ENCODE measurements at regions of chr17 and their contacts with region 1.

Region 1: DNA sequence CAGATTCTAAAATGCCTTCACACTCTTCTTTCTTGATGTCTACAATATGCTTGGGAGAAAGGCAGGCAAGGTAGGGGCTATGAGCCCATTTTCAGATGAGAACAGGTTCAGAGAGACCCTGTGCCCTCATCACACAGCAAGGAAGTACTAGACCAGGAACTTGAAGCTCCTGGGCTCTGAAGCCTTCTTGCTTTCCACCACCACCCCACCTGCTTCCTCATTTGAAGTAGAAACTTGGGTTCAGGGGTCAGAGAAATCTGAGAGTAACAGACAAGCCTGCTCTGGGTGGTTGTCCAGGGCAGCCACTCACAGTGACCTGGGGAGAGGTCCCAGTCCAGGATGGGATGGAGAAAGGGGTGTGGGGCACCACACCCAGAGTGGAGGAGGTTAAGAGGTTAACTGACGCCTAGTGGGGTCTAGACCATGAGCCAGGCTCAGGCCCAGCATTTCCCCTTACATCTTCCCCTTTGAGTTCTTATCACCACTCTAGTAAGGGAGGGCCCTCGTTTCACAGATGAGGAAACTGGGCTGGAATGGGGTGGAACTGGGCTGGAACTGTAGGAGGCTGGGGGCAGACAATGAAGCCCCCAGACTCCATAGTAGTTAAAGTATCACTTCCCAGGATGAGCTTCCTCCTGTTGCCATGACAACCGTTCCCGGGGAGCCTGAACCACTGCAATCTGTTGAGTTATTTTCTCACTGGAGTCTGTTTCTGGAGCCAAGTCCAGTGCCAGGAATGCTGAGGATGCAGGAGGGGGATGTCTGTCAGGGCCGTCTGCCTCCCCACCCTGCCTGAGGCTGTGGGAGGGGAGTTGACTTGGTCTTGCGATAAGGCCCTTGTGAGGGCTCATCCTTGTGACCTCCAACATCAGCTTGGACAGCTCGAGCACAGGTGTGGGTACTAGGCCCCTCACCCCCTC is 16.2 kb upstream of the PHF12 start:
- DNase-seq: no peak
- CTCF ChIP-seq: no peak

Region 2: DNA sequence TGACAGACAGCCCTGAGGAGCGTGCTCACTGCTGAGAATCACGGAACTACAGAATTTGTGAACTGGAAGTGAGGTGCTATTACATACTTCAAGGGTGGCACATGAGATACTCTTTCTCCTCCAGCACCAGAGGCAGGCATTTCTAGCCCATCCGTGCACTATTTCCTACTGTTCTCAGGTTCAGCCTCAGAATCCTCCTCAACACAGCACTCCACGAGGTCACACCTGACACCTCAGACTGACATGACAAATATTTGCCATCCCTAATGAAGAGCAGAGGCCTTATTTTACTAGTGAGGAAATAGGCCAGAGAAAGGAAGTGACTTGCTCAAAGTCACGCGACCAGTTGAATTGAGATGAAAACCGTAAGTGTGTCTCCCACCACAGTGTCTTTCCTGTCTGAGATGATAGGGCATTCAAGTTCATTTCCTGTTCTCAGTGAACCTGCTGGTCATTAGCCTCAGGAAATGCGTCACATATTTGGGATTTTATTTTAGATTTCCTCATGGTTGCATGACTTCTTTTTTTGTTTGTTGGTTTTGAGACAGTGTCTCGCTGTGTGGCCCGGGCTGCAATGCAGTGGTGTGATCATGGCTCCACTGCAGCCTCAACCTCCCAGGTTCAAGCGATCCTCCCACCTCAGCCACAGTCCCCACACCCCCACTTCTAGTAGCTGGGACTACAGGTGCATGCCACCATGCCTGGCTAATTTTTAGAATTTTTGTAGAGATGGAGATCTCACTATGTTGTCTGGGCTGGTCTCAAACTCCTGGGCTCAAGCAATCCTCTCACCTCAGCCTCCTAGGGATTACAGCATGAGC is 14.9 kb after region 1 on chr17:
- CTCF ChIA-PET with region 1: interaction called, 18 read pairs
- POLR2A ChIA-PET with region 1: no interaction called
- DNase-seq: peak; percentile 62
- CTCF ChIP-seq: no peak

Region 3: DNA sequence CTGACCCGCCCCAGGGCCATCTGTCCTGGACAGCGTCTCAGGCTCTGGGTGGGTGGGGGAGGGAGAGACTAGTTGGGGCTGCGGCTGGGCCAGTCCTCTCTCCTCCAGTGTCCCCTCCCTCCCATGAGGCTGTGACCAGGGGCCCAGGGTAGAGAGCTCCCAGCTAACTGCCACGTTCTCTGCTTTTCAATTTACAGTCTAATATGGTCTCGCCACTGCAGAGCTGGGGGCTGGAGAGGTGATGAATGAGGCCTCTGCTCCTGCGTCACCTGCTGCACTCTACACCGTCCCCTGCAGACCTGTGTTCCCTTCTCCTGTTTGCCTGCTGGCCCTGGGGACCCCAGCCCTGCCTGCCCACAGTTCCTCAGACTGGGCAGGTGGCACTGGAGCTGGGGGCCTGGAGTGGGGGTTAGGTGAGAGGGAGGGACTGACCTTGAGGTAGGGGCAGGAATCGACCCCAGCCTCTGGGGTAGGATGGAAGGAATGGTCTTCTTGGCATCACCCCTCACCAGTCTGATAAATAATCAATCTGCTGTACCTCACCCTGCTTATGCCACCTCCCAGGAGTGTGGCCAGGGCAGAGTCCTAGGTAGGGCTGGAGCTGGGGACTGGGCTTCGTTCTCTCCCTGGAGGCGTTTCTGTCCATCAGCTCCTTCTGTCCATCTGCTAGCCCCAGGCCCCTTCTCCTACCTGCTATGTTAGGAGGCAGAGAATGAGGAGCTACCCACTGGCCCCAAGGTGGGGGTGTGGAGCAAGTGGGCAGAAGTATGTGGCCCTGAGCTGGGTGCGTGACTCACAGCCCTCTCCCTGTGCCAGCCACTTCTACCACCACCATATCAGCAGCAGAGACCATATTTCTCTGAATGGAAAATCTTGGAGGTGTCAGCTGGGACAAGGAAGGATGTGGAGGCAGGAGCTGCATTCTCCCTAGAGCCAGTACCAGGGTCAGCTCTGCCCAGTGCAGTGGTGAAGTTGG is 25.4 kb after region 1 on chr17:
- CTCF ChIA-PET with region 1: interaction called, 18 read pairs
- POLR2A ChIA-PET with region 1: no interaction called
- DNase-seq: no peak
- CTCF ChIP-seq: no peak

Region 4: GRCh38 chr17:29111816-29112499 is 144.5 kb after region 1 on chr17:
- CTCF ChIA-PET with region 1: interaction called, 346 read pairs
- POLR2A ChIA-PET with region 1: no interaction called
- DNase-seq: peak; percentile 76
- CTCF ChIP-seq: peak; percentile 92

Region 5: DNA sequence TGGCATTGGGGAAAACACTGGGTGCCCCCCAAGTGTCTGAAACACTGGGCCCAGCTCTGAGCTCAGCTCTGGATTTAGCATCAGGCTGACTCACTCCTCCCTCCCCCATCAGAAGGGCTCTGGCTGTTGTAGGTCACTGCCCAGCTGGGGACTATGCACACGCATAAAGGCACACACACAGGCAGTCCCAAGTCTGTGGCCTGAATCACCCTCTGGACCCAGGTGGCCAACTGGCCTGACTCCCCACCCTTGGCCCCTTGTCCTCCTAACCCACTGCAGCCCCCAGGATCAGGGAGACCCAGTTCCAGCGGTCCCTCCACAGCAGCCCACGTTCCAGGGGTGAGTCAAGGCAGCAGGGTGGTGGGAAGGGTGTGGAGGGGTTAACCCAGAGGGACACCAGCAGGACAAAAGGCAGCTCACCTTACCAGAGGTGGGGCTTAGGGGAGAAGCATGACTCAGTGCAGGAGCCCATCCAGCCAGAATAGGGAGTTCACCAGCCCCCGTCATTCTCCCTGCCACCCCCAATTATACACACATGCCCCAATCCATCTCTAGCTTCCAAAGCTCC is 165.7 kb after region 1 on chr17:
- CTCF ChIA-PET with region 1: interaction called, 16 read pairs
- POLR2A ChIA-PET with region 1: no interaction called
- DNase-seq: no peak
- CTCF ChIP-seq: no peak